Activated CD8-positive, alpha-beta memory T cell treated with anti-CD3 and anti-CD28 coated beads, Interleukin-2, amount 10 ng/mL, durations not matched to agents 7 days and 5 days (primary cell): ENCODE measurements at regions of chr5 and their contacts with region 1.

Region 1: DNA sequence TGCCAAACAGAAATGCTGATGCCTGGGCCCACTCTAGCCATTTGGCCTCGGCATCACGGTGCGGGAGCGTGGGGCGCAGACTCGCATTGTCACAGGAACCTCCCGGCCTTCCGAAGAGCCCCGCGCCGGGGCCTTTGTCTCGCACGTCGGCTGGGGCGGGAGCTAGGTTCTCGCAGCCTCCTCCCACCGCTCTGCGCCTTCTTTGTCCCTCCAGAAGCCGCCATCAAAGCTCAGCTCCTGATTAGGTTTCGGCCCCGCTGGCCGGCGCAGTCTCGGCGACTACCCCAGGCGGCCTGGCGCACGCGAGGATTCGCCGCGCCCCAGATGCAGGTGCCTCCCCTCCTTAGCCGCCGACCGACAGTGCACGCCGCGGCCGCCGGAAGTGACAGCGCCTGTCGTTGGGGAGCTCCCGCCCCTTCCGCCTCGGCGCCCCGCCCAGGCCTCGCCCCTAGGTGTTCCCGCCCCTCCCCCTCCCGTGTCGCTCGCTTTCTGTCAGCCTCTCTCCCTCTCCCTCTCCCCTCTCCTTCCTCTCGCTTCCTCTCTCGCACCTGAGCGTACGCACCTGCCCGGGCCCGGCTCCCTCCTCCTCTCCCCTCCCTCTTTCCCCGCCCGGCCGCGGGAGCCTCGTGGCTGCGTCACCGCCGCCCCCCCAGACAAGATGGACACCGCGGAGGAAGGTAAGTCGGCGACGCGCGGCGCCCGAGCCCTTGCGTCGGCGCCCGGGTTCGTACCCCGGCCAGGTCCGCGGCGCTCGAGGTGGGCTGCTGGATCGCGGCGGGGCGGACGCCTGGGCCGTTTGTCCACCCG is at the start of gene MARCHF6:
- DNase-seq: peak; percentile 96
- ATAC-seq: peak; percentile 88
- H3K4me3 Mint-ChIP-seq: peak within 1 kb of the TSS; percentile 94
- H3K27ac Mint-ChIP-seq: peak within 1 kb of the TSS; percentile 99
- H3K4me1 Mint-ChIP-seq: peaks cover 33% of the 10 kb centered on the region
- H3K27me3 Mint-ChIP-seq: no peaks in the 10 kb centered on the region
- total RNA-seq, gene MARCHF6: 88.5 to 89.9 TPM

Region 2: DNA sequence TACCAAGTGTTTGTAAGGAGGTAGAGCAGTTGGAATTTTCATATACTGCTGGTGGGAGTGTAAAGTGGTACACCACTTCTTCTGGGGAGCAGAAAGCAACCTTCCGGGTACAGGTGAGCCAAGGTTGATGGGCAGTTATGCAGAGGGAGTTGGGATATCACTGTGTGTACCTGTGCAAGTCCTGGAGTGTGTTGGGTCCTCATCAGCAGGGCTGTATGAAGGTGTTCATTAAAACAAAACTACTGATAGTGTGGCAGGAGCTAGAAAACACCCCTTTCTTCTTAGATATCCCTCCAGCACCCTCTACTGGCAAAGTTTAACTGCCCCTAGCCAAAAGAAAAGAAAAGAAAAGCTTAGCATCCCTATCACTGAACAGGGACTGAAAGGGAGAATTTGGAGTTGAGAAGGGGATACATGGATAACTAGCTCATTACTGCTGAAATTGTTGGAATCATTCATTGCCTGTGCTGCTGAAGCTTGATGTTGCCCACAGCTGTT is 10.8 kb after region 1 on chr5:
- CTCF ChIA-PET with region 1: interaction called, 10 read pairs
- DNase-seq: no peak
- ATAC-seq: peak; percentile 47
- H3K4me3 Mint-ChIP-seq: no peak overlapping the region
- H3K27ac Mint-ChIP-seq: no peak overlapping the region
- H3K4me1 Mint-ChIP-seq: peaks cover 20% of the 10 kb centered on the region
- H3K27me3 Mint-ChIP-seq: no peaks in the 10 kb centered on the region